ENCODE measurements at regions of chr21 and their contacts with region 1.

Region 1: DNA sequence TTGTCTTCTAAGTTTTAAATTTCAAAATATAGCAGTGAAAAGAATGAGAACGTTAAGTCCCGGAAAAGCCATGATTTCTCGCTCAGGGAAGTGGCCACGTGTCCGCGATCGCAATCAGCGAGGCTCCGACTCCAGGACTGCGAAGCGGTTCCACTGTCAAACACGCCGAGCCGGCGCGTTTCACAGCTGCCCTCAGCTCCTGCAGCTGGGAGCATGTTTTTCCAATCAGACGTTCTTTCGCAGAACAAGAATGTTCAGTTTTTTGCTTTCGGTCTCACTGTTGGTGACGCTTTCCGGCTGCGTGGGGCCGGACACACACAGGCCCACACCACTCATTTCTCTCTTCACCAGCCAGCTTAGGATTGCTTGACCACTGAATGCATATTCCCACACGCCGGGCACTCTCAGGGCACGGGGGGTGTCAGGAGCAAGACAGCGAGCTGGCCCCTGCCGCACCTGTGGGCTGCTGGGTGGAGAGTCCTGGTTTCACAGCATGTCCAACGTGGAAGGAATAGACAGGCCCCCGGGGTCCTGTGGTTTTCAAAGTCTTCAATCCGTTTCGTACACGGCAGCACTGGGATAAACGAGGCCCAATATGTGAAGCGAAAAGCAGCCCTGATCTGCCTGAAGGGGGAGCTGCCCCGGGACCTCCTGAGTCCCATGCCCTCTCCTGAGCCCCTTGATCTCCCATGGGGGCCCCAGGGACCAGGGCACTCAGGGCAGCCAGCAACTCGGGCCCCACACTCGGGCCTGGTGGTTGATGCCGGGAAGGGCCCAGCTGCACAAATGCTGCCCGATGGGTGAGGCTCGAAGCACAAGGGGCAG is 47.3 kb upstream of the COL18A1 start:
- DNase-seq: no peak
- ATAC-seq: no peak
- H3K4me3 ChIP-seq: no peak overlapping the region
- H3K27ac ChIP-seq: no peak overlapping the region
- H3K4me1 ChIP-seq: peaks cover 34 to 69% of the 10 kb centered on the region in 2 experiments; a peak in 4 of 5 replicates
- H3K27me3 ChIP-seq: peaks cover 11 to 37% of the 10 kb centered on the region in 2 experiments
- CTCF ChIP-seq: peak; percentile 32 to 55 (median 40); a peak in 5 of 6 replicates
- EP300 ChIP-seq: no peak
- POLR2A ChIP-seq: no peak
- RAD21 ChIP-seq: no peak

Region 2: GRCh38 chr21:45294509-45295291 is 62.9 kb before region 1 on chr21:
- CTCF ChIA-PET with region 1: interaction called, 3 read pairs
- POLR2A ChIA-PET with region 1: no interaction called
- in situ Hi-C with region 1: no loop called
- intact Hi-C with region 1: loop called (anchors 5 kb)
- DNase-seq: peak in 1 of 4 experiments; percentile 31
- ATAC-seq: no peak
- H3K4me3 ChIP-seq: no peak overlapping the region
- H3K27ac ChIP-seq: no peak overlapping the region
- H3K4me1 ChIP-seq: peaks cover 18 to 50% of the 10 kb centered on the region in 2 experiments
- H3K27me3 ChIP-seq: no peaks in the 10 kb centered on the region
- CTCF ChIP-seq: no peak
- EP300 ChIP-seq: no peak
- POLR2A ChIP-seq: no peak
- RAD21 ChIP-seq: no peak

Region 3: GRCh38 chr21:45410865-45411809 is 53.5 kb after region 1 on chr21:
- CTCF ChIA-PET with region 1: no interaction called
- POLR2A ChIA-PET with region 1: no interaction called
- in situ Hi-C with region 1: no loop called
- intact Hi-C with region 1: loop called (anchors 1 kb)
- DNase-seq: peak; percentile 97 to 99 (median 98)
- ATAC-seq: peak; percentile 98
- H3K4me3 ChIP-seq: no peak overlapping the region
- H3K27ac ChIP-seq: peak overlapping the region; percentile 83
- H3K4me1 ChIP-seq: peaks cover 47 to 93% of the 10 kb centered on the region in 2 experiments
- H3K27me3 ChIP-seq: no peaks in the 10 kb centered on the region
- CTCF ChIP-seq: no peak
- EP300 ChIP-seq: peak; percentile 95
- POLR2A ChIP-seq: no peak
- RAD21 ChIP-seq: peak in 1 of 2 experiments; percentile 29; a peak in 1 of 4 replicates

Region 4: GRCh38 chr21:45439161-45439872 is 81.7 kb after region 1 on chr21:
- CTCF ChIA-PET with region 1: interaction called, 8 read pairs
- POLR2A ChIA-PET with region 1: no interaction called
- in situ Hi-C with region 1: no loop called
- intact Hi-C with region 1: loop called (anchors 1 kb)
- DNase-seq: peak; percentile 90 to 91 (median 90)
- ATAC-seq: peak; percentile 98
- H3K4me3 ChIP-seq: no peak overlapping the region
- H3K27ac ChIP-seq: peak overlapping the region; percentile 55; the same call in 2 of the 3 replicates
- H3K4me1 ChIP-seq: peaks cover 10 to 61% of the 10 kb centered on the region in 2 experiments; a peak in 4 of 5 replicates
- H3K27me3 ChIP-seq: peaks cover 0 to 7% of the 10 kb centered on the region in 2 experiments; a peak in 2 of 5 replicates
- CTCF ChIP-seq: peak; percentile 97 to 98 (median 98)
- EP300 ChIP-seq: no peak
- POLR2A ChIP-seq: no peak
- RAD21 ChIP-seq: peak; percentile 100

Region 5: GRCh38 chr21:45554477-45555175 is 197.0 kb after region 1 on chr21:
- CTCF ChIA-PET with region 1: no interaction called
- POLR2A ChIA-PET with region 1: no interaction called
- in situ Hi-C with region 1: no loop called
- intact Hi-C with region 1: no loop called
- DNase-seq: peak; percentile 88 to 93 (median 92)
- ATAC-seq: peak; percentile 81
- H3K4me3 ChIP-seq: peak overlapping the region; percentile 45
- H3K27ac ChIP-seq: no peak overlapping the region
- H3K4me1 ChIP-seq: peaks cover 16 to 63% of the 10 kb centered on the region in 2 experiments; a peak in 3 of 5 replicates
- H3K27me3 ChIP-seq: peaks cover 20 to 36% of the 10 kb centered on the region in 2 experiments
- CTCF ChIP-seq: peak; percentile 79 to 92 (median 82)
- EP300 ChIP-seq: no peak
- POLR2A ChIP-seq: no peak
- RAD21 ChIP-seq: peak; percentile 56 to 79

Measured in K562 (cell line).